ENCODE measurements at regions of chr1 and their contacts with region 1.

Region 1: DNA sequence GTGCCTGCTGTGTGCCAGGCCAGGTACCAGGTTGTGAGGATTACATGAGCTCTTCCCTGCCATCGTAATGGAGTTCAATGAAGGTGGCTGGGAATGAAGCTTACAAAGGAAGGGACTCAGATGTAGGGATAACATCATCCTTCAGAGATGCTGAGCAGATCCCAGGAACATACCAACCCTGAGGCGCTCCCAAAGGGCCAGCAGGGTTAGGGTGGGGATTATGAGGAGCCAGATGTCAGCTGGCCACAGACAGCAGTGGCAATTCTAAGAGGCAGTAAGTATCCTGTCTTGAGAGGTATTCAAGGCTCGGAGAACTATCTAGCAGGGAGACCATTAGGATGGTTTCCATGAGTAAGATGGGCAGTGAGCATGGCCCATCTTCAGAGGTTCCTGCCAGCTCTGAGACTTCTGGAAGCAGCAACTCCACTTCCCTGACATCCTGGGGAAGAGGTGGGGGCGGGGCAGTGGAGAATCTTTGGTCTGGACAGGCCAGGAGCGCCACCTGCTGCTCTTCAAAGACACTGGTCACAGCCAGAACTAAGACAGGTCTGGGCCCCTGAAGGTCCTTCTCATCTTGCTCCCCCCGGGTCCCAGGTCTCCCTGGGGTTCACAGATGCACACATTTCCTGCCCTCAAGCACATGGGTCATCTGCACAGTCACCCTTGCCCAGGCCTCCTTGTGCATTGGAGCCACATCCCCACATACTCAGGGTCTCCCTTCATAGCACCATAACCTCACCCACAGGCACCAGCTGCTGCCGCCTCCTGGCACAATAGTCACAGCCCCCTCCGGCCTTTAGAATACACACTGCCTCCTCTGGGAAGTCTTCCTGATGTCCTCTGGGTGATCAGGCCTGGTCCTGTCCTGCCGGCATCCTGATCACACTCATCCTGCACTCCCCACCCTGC is 2.7 kb upstream of the SDC3 start:
- DNase-seq: peak; percentile 86
- H3K27ac ChIP-seq: no peak overlapping the region
- CTCF ChIP-seq: peak; percentile 84

Region 2: GRCh38 chr1:30718636-30719405 is 192.5 kb before region 1 on chr1:
- CTCF ChIA-PET with region 1: interaction called, 30 read pairs
- POLR2A ChIA-PET with region 1: no interaction called
- DNase-seq: peak; percentile 54
- H3K27ac ChIP-seq: peak overlapping the region; percentile 90
- CTCF ChIP-seq: peak; percentile 88

Region 3: GRCh38 chr1:30779294-30780071 is 131.8 kb before region 1 on chr1:
- CTCF ChIA-PET with region 1: interaction called, 43 read pairs
- POLR2A ChIA-PET with region 1: no interaction called
- DNase-seq: peak; percentile 61
- H3K27ac ChIP-seq: no peak overlapping the region
- CTCF ChIP-seq: peak; percentile 92

Region 4: GRCh38 chr1:30853350-30853749 is 58.0 kb before region 1 on chr1:
- CTCF ChIA-PET with region 1: interaction called, 10 read pairs
- POLR2A ChIA-PET with region 1: no interaction called
- DNase-seq: no peak
- H3K27ac ChIP-seq: no peak overlapping the region
- CTCF ChIP-seq: no peak